Mucosa of descending colon (tissue), 3 donors: ENCODE measurements at regions of chr18 and their contacts with region 1.

Region 1: GRCh38 chr18:58529714-58530354 is 99.1 kb downstream of the ALPK2 start:
- DNase-seq: peak in 2 of 3 donors; percentile 73 to 85
- ATAC-seq: peak; percentile 50
- H3K4me3 ChIP-seq: no peak overlapping the region
- H3K4me1 ChIP-seq: peaks cover 16% of the 10 kb centered on the region
- CTCF ChIP-seq: peak; percentile 70

Region 2: GRCh38 chr18:58186258-58186948 is 343.4 kb before region 1 on chr18:
- intact Hi-C with region 1: no loop called
- DNase-seq: no peak
- ATAC-seq: peak; percentile 79
- H3K4me3 ChIP-seq: no peak overlapping the region
- H3K4me1 ChIP-seq: peaks cover 19% of the 10 kb centered on the region
- CTCF ChIP-seq: no peak

Region 3: DNA sequence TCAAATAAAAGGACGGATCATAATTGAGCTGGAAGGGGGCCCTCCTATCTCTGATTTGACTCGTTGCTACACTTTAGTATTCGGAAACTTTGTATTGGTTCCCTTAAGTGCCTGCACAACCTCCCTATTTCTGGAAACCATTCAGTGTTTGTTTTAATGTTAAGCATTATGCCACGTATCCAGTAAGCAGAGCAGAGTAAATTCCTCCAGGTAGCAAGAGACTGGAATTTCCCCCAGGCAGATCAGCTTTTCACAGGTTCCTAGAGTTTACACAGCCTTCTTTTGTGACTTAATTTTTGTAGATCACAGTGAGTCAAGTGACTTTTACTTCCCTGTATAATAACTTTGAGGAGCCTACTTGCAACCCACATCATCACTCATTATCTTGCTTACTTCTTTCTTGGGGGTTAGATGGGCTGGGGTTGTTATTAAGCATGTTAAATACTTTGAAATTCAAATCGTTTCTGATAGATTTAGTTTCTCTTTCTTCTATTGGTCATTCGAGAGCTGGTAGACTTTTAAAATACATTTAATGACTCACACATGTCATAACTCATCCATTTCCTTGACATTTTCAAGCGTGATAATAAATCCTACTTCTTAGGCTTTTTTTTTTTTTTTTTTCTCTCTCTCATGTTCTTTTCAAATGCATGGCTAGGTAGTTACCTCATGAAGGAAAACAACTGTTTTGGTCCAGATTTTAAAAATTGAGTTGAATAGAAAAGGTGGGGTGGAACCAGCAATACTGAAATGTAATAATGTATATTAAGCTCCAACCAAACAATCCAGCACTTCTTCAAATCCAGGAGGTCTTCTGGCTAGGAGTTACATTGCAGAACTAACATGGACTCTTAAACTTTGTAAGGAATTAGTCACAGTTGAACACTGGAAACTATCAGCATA is 266.5 kb before region 1 on chr18:
- intact Hi-C with region 1: no loop called
- DNase-seq: no peak
- ATAC-seq: peak; percentile 73
- H3K4me3 ChIP-seq: no peak overlapping the region
- H3K4me1 ChIP-seq: peaks cover 3% of the 10 kb centered on the region
- CTCF ChIP-seq: no peak

Region 4: GRCh38 chr18:58359218-58359617 is 170.6 kb before region 1 on chr18:
- intact Hi-C with region 1: no loop called
- DNase-seq: no peak
- ATAC-seq: no peak
- H3K4me3 ChIP-seq: no peak overlapping the region
- H3K4me1 ChIP-seq: no peaks in the 10 kb centered on the region
- CTCF ChIP-seq: no peak

Region 5: GRCh38 chr18:58761241-58761969 is 231.6 kb after region 1 on chr18:
- intact Hi-C with region 1: loop called (anchors 2 to 5 kb)
- DNase-seq: no peak
- ATAC-seq: no peak
- H3K4me3 ChIP-seq: no peak overlapping the region
- H3K4me1 ChIP-seq: no peaks in the 10 kb centered on the region
- CTCF ChIP-seq: no peak

Region 6: DNA sequence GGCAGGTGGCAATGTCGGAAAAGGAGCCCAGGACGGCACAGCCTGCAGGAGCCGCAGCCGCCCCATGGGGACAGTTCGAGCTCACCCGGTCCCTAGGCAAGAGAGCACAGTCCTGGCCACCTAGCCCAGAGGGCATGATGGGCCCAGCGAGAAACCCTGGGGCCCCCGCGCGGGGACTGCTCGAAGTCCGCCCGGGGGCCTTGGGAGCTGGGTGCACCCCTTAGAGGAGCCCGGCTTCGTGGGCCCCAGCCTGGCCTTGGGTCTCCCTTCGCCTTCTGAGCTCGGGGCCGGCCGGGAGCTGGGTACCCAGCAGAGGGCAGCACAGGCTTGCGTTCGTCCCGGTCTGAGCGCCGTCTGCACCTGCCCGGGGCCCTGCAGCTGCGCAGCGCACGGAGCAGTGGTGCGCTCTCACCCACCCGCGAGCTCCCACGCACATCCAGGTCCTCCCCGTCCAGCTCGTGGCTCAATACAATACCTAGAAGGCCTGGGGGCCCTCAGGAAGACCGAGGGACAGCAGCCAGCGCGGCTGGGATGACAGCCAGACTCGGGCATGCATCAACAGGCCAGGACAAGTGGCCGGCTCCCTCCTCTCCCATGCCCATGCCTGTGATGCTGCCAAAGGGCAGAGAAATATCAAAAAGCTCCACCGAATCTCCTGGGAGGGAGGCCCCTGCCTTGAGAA is 238.6 kb after region 1 on chr18:
- intact Hi-C with region 1: loop called (anchors 2 to 5 kb)
- DNase-seq: peak; percentile 75 to 84 (median 80)
- ATAC-seq: peak; percentile 95
- H3K4me3 ChIP-seq: no peak overlapping the region
- H3K4me1 ChIP-seq: peaks cover 8% of the 10 kb centered on the region
- CTCF ChIP-seq: peak; percentile 82